Cardiac septum (tissue), 1 donor: ENCODE measurements at regions of chr1 and their contacts with region 1.

Region 1: GRCh38 chr1:111990878-111991718 is 1.6 kb upstream of the KCND3 start:
- DNase-seq: peak; percentile 84

Region 2: GRCh38 chr1:111672331-111672730 is 318.8 kb before region 1 on chr1:
- intact Hi-C with region 1: no loop called
- DNase-seq: no peak

Region 3: DNA sequence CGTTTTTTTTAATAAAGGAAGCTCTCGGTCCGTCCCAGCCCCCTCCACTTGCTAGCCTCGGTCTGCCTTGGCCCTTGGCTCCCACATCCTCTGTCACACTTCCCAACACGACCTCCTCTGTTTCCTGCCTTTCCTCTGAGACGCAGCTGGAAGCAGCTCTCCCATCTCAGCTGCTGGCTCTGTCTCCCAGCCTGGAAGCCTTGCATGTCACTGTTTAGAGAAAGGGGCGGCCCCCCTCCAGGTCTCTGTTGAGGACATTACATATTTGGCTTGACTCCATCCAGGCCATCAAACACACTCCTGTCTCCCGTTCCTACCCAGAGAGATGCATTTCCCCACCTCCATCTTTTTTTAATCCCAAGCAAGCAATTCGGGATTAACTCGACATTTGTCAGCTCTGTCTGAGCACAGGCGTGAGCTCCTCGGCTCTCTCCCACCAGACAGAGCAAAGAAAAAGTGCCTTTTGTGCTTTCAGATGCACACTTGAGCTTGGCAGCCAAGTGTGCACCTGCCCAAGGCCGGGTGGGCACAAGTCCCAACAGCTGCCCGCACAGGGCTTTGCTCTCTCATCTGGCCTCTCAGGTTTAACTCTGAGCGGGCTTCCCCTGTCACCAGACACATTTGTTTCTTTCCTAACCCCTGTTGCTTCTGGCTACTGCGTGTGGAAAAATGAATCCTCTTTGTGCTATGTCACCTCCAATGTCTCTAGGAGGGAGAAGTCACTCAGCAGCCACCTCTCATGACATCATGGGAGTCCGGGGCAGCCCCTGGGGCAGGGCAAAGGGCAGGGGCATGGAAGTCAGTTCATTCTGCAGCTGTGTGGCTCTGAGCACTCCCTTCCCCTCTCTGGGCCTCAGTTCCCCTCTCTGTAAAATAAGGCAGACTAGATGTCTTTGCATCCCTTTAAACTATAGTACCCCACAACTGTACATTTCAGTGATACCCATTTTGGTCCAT is 109.9 kb before region 1 on chr1:
- intact Hi-C with region 1: loop called (anchors 2 kb)
- DNase-seq: no peak

Region 4: DNA sequence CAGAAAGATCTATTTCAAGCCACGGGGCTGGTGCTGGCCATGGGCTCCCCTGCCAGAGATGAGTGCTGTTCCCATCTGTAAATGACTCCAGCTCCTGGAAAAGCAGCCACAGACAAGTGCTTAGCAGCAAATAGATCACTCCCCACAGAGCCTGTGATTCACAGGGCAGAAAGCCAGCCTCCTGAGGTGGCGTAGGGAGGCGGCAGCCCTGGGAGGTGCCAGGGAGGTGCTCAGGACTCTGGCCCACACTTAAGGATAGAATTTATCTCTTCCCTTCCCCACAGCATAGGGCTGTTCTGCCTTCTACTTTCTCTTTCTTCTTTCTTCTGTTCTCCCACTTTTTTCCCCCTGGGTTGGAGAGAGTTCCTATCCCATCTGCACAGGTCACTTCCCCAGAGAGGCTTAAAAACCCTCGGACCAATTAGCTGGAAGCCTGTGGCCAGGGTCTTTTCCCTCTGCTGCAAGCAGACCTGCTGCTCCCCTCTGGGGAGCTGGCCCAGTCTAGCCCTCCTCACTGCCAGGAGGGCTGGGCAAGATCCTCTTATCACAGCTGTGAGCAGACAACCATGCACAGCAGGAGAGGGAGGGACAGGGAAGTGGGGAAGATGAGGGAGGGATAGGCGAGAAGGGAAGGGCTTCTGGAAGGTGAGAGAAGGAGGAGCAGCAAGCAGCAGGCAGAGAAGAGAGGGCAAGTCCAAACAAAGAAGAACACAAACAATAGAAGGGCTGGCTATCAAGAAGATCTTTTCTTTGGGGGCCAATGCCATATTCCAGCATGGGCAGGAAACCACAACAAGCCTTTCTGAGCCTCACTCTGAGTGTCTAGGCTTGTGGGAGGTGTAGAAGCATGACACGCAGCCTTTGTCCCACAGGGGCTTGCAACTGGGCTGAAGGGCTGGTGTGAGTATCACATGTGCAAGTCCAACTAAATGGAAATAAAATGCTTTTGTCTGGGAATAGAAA is 42.6 kb before region 1 on chr1:
- intact Hi-C with region 1: loop called (anchors 2 kb)
- DNase-seq: peak; percentile 79

Region 5: GRCh38 chr1:112048421-112048820 is 57.3 kb after region 1 on chr1:
- intact Hi-C with region 1: no loop called
- DNase-seq: no peak

Region 6: DNA sequence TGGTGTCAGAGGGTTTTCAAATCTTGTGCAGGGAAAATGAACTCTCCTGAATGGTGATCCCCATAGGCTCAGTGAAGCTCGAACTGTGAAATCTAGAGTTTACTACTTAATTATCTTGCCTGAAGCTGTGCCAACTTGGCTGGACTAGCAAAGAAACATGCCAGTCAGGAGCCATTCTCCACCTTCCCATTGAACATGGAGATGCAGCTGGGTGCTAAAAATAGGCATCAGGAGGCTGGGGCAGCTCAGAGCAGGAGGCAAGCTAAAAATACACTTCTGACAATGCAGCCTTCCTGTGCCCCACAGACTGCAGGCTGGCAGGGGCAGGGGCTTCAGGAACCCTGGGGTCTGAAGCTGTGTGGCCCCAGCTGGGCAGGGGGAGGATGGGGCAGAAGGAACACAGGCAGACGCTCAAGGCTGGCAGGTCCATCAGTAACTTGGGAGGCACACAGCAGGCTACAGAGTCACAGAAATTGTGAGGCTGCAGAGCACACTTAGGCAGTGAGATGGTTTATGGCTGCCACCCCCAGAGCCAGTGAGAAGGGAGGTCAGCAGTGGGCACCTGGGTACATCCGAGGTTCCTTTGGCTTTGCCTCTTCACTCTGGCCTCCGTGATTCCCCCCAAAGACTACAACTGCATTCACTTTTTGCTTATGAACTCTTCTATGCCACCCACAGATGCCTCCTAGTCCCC is 153.8 kb after region 1 on chr1:
- intact Hi-C with region 1: loop called (anchors 5 kb)
- DNase-seq: no peak